ENCODE measurements at regions of chr6 and their contacts with region 1.

Region 1: GRCh38 chr6:136643850-136644596 is 93.8 kb upstream of the MAP7 start:
- DNase-seq: peak; percentile 90
- ATAC-seq: peak; percentile 41
- H3K4me3 Mint-ChIP-seq: no peak overlapping the region
- H3K27ac Mint-ChIP-seq: no peak overlapping the region
- H3K4me1 Mint-ChIP-seq: no peaks in the 10 kb centered on the region
- H3K27me3 Mint-ChIP-seq: no peaks in the 10 kb centered on the region
- CTCF ChIP-seq: peak; percentile 95

Region 2: DNA sequence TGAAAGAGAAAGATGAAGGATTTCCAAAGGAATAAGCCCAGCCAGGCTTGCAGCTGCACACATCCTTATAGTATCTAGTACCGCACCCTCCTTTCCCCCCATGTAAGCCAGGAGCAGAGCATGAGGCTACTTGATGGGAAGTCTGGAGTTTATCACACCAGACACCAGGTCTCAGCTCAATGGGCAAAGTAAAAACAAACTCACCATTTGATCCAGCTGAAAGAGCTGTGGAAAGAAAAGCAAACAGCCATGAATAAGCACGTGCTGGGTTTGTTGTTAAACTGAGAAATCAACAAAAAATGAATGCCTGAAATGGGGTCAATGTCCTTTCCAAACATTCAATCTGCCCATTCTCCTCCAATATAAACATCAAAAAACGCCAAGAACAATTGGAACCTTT is 43.2 kb before region 1 on chr6:
- CTCF ChIA-PET with region 1: interaction called, 10 read pairs
- POLR2A ChIA-PET with region 1: no interaction called
- intact Hi-C with region 1: no loop called
- DNase-seq: no peak
- ATAC-seq: no peak
- H3K4me3 Mint-ChIP-seq: no peak overlapping the region
- H3K27ac Mint-ChIP-seq: no peak overlapping the region
- H3K4me1 Mint-ChIP-seq: no peaks in the 10 kb centered on the region
- H3K27me3 Mint-ChIP-seq: no peaks in the 10 kb centered on the region
- CTCF ChIP-seq: no peak

Region 3: DNA sequence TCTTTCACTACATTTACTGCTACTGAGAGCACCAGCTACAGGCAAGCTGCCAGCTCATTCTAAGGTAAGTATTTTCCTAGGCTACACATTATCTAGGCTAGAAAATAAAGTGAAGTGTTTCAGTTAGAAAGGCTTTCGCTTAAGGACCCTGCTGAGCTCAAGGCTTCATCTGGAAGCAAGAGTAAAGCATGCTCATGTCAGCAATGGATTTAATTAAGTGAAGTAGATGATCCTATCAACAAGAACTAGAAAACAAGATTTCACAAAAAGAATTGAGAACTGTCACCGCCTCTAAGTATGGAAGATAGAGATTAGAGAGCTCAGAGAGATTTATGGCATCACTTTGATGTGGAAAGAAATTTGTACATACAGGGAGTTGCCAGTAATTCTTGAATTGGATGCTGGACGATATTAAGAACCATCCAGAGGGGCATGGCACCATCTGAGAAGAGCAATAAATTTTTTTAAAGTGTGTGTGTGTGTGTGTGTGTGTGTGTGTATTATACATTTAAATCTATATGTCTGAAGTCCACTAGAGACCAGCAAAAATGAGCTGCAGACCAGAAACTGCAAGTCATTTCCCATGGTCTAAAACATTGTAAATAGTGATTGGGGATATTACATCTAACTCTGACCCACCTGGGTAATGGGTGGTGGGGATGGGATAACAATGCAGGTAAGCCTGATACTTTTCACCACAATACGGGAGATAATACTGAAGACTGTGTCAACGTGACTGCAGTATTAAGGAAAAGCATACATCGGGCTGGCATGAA is 11.4 kb after region 1 on chr6:
- CTCF ChIA-PET with region 1: interaction called, 18 read pairs
- POLR2A ChIA-PET with region 1: no interaction called
- intact Hi-C with region 1: no loop called
- DNase-seq: no peak
- ATAC-seq: no peak
- H3K4me3 Mint-ChIP-seq: no peak overlapping the region
- H3K27ac Mint-ChIP-seq: no peak overlapping the region
- H3K4me1 Mint-ChIP-seq: no peaks in the 10 kb centered on the region
- H3K27me3 Mint-ChIP-seq: no peaks in the 10 kb centered on the region
- CTCF ChIP-seq: no peak

Region 4: DNA sequence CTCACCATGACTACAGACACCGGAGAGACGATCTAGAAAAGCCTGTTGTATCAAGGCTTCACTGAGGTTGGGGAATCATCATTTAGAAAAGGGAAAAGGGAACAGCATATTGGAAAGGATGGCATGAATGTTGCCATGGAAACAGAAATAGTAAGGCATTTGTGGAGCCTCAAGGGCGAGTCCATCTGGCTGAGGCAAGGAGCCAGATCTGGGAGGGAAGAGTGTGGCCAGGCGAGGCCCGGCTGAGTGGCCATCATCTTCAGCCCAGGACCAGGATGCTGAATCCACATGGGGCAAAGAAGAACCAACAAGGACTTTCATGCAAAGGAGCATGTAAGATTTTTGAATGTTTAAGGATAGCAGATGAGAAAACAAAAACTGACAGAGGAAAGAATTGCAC is 62.4 kb after region 1 on chr6:
- CTCF ChIA-PET with region 1: interaction called, 10 read pairs
- POLR2A ChIA-PET with region 1: no interaction called
- intact Hi-C with region 1: no loop called
- DNase-seq: no peak
- ATAC-seq: no peak
- H3K4me3 Mint-ChIP-seq: no peak overlapping the region
- H3K27ac Mint-ChIP-seq: no peak overlapping the region
- H3K4me1 Mint-ChIP-seq: peaks cover 2% of the 10 kb centered on the region
- H3K27me3 Mint-ChIP-seq: no peaks in the 10 kb centered on the region
- CTCF ChIP-seq: no peak

Region 5: DNA sequence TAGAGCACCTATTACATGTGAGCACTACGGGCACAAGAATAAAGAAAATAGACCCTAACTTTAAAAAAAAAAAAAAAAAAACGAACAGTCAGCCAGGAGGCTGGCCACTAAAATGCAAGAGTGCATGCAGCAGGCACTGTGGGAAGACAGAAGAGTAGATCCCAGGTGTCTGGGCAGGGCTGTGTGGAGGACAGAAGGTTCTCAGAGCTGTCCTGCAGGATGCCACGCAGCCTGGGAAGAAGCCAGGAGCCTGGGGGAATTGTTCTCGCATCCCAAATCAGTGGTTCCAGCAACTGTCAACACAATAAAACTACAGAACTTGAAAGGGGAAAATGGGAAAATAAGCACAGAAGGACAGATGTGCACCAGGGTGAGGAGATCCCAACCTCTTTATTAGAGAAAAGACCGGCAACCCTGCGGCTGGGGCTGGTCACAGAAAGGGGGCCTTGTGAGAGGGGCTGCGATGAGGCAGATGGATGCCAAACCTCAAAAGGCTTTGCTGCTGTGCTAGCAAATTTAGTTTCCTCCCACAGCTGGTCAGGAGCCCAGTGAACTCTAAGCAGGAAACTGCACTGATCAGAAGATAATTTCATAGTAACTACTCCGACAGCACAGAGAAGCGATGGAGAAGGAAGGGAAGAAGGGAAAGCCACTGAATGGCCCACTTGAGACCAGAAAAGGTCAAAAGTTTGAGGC is 117.4 kb after region 1 on chr6:
- CTCF ChIA-PET with region 1: interaction called, 19 read pairs
- POLR2A ChIA-PET with region 1: no interaction called
- intact Hi-C with region 1: no loop called
- DNase-seq: peak; percentile 42
- ATAC-seq: peak; percentile 37
- H3K4me3 Mint-ChIP-seq: peak overlapping the region; percentile 52
- H3K27ac Mint-ChIP-seq: peak overlapping the region; percentile 52
- H3K4me1 Mint-ChIP-seq: peaks cover 62% of the 10 kb centered on the region
- H3K27me3 Mint-ChIP-seq: no peaks in the 10 kb centered on the region
- CTCF ChIP-seq: no peak

Region 6: GRCh38 chr6:136822376-136823127 is 178.5 kb after region 1 on chr6 and contains the start of gene PEX7:
- CTCF ChIA-PET with region 1: interaction called, 14 read pairs
- POLR2A ChIA-PET with region 1: no interaction called
- intact Hi-C with region 1: no loop called
- DNase-seq: peak; percentile 93
- ATAC-seq: peak; percentile 94
- H3K4me3 Mint-ChIP-seq: peak within 1 kb of the TSS; percentile 87
- H3K27ac Mint-ChIP-seq: peak within 1 kb of the TSS; percentile 96
- H3K4me1 Mint-ChIP-seq: peaks cover 22% of the 10 kb centered on the region
- H3K27me3 Mint-ChIP-seq: peaks cover 2% of the 10 kb centered on the region
- CTCF ChIP-seq: peak; percentile 79
- total RNA-seq, gene PEX7: 4.5 to 6.0 TPM

Measured in activated CD8-positive, alpha-beta T cell treated with anti-CD3 and anti-CD28 coated beads for 36 hours (primary cell).